IMR-90 (cell line): ENCODE measurements at regions of chr3 and their contacts with region 1.

Region 1: DNA sequence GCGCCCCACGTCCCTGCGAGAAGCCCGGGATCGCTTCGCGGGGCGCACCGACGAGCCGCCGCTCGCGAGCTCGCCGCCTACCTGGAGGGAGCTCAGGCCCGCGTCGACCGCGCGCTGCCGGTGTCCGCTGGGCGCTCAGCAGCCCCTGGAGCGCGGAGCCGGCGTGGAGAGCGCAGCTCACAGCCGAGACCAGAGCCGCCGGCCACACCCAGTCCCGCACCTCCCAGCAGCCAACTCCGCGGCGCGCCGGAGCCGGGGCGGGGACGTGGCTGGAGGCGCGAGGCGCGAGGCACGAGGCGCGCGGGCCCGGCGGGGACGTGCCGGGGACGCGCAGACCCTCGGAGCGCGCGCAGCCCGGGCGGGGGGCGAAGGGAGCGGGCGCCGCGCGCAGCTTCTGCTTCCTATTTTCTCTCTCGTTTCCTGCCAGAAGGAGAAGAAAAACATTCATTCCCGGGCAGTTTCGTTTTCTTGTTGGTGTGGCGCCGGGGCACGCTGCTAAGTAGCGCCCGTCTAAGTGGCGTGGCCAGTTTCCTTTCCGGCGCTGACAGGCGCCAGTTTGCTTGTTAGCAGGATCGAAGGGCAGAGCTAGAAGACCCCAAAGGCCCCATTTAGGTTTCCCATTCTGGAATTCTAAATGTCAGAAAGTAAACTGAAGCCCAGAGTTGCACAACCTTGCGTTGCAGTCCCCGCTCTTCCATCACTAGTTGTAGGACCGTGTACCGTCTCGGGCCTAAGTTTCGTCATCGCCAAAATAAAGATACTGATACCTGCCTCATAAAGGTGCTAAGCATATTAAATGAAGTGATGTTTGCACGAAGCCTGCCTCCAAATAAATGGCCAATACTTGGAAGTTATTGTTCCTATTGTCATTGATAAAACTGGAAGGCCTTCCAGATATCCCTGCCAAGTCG is at the start of gene GNB4:
- DNase-seq: peak; percentile 82
- ATAC-seq: peak; percentile 93
- H3K4me3 ChIP-seq: peak within 1 kb of the TSS; percentile 81
- H3K27ac ChIP-seq: peak within 1 kb of the TSS; percentile 97
- H3K4me1 ChIP-seq: peaks cover 3% of the 10 kb centered on the region
- H3K27me3 ChIP-seq: no peaks in the 10 kb centered on the region
- CTCF ChIP-seq: no peak
- POLR2A ChIP-seq: peak; percentile 56; the same call in 1 of the 2 replicates
- RAD21 ChIP-seq: no peak
- total RNA-seq, gene GNB4: 112 and 131 TPM in 2 replicates

Region 2: GRCh38 chr3:179421500-179421899 is 30.0 kb before region 1 on chr3:
- CTCF ChIA-PET with region 1: no interaction called
- POLR2A ChIA-PET with region 1: no interaction called
- dilution Hi-C with region 1: no loop called
- in situ Hi-C with region 1: no loop called
- intact Hi-C with region 1: no loop called
- DNase-seq: peak; percentile 41
- ATAC-seq: peak; percentile 64
- H3K4me3 ChIP-seq: no peak overlapping the region
- H3K27ac ChIP-seq: no peak overlapping the region
- H3K4me1 ChIP-seq: no peaks in the 10 kb centered on the region
- H3K27me3 ChIP-seq: no peaks in the 10 kb centered on the region
- CTCF ChIP-seq: peak; percentile 58
- POLR2A ChIP-seq: no peak
- RAD21 ChIP-seq: peak; percentile 62

Region 3: GRCh38 chr3:179526989-179527391 is 75.5 kb after region 1 on chr3:
- CTCF ChIA-PET with region 1: no interaction called
- POLR2A ChIA-PET with region 1: no interaction called
- dilution Hi-C with region 1: no loop called
- in situ Hi-C with region 1: no loop called
- intact Hi-C with region 1: loop called (anchors 1 kb)
- DNase-seq: peak; percentile 84
- ATAC-seq: peak; percentile 99
- H3K4me3 ChIP-seq: peak overlapping the region; percentile 41
- H3K27ac ChIP-seq: peak overlapping the region; percentile 99
- H3K4me1 ChIP-seq: peaks cover 5% of the 10 kb centered on the region
- H3K27me3 ChIP-seq: no peaks in the 10 kb centered on the region
- CTCF ChIP-seq: no peak
- POLR2A ChIP-seq: no peak
- RAD21 ChIP-seq: no peak

Region 4: GRCh38 chr3:179967622-179968021 is 516.1 kb after region 1 on chr3:
- CTCF ChIA-PET with region 1: no interaction called
- POLR2A ChIA-PET with region 1: no interaction called
- dilution Hi-C with region 1: no loop called
- in situ Hi-C with region 1: no loop called
- intact Hi-C with region 1: no loop called
- DNase-seq: peak; percentile 0
- ATAC-seq: no peak
- H3K4me3 ChIP-seq: no peak overlapping the region
- H3K27ac ChIP-seq: no peak overlapping the region
- H3K4me1 ChIP-seq: no peaks in the 10 kb centered on the region
- H3K27me3 ChIP-seq: no peaks in the 10 kb centered on the region
- CTCF ChIP-seq: no peak
- POLR2A ChIP-seq: no peak
- RAD21 ChIP-seq: no peak